Naive thymus-derived CD4-positive, alpha-beta T cell (primary cell): ENCODE measurements at regions of chr5 and their contacts with region 1.

Region 1: GRCh38 chr5:87780831-87781760 is 368.4 kb upstream of the CCNH start:
- DNase-seq: peak; percentile 41 to 80 (median 68)
- ATAC-seq: peak; percentile 98
- H3K4me3 ChIP-seq: no peak overlapping the region
- H3K4me3 Mint-ChIP-seq: no peak overlapping the region
- H3K27ac ChIP-seq: no peak overlapping the region
- H3K27ac Mint-ChIP-seq: no peak overlapping the region
- H3K4me1 ChIP-seq: no peaks in the 10 kb centered on the region
- H3K4me1 Mint-ChIP-seq: peaks cover 0 to 4% (median 0%) of the 10 kb centered on the region in 7 donors
- H3K27me3 ChIP-seq: peaks cover 0 to 6% of the 10 kb centered on the region in 2 donors
- H3K27me3 Mint-ChIP-seq: peaks cover 18 to 55% (median 46%) of the 10 kb centered on the region in 5 donors

Region 2: GRCh38 chr5:86596476-86596875 is 1184.6 kb before region 1 on chr5:
- CTCF ChIA-PET with region 1: no interaction called
- POLR2A ChIA-PET with region 1: no interaction called
- intact Hi-C with region 1: no loop called
- DNase-seq: no peak
- ATAC-seq: no peak
- H3K4me3 ChIP-seq: no peak overlapping the region
- H3K4me3 Mint-ChIP-seq: no peak overlapping the region
- H3K27ac ChIP-seq: no peak overlapping the region
- H3K27ac Mint-ChIP-seq: no peak overlapping the region
- H3K4me1 ChIP-seq: no peaks in the 10 kb centered on the region
- H3K4me1 Mint-ChIP-seq: no peaks in the 10 kb centered on the region
- H3K27me3 ChIP-seq: peaks cover 0 to 4% of the 10 kb centered on the region in 2 donors
- H3K27me3 Mint-ChIP-seq: peaks cover 0 to 52% (median 35%) of the 10 kb centered on the region in 5 donors

Region 3: GRCh38 chr5:87954121-87954520 is 173.0 kb after region 1 on chr5:
- CTCF ChIA-PET with region 1: no interaction called
- POLR2A ChIA-PET with region 1: no interaction called
- intact Hi-C with region 1: no loop called
- DNase-seq: no peak
- ATAC-seq: no peak
- H3K4me3 ChIP-seq: no peak overlapping the region
- H3K4me3 Mint-ChIP-seq: no peak overlapping the region
- H3K27ac ChIP-seq: no peak overlapping the region
- H3K27ac Mint-ChIP-seq: no peak overlapping the region
- H3K4me1 ChIP-seq: no peaks in the 10 kb centered on the region
- H3K4me1 Mint-ChIP-seq: no peaks in the 10 kb centered on the region
- H3K27me3 ChIP-seq: peaks cover 0 to 5% of the 10 kb centered on the region in 2 donors
- H3K27me3 Mint-ChIP-seq: peaks cover 0 to 11% (median 5%) of the 10 kb centered on the region in 5 donors

Region 4: GRCh38 chr5:88140856-88141752 is 360.0 kb after region 1 on chr5:
- CTCF ChIA-PET with region 1: no interaction called
- POLR2A ChIA-PET with region 1: no interaction called
- intact Hi-C with region 1: loop called in 1 of 2 experiments (anchors 5 kb)
- DNase-seq: peak; percentile 50 to 83 (median 60)
- ATAC-seq: peak; percentile 92
- H3K4me3 ChIP-seq: peak overlapping the region; percentile 43
- H3K4me3 Mint-ChIP-seq: no peak overlapping the region
- H3K27ac ChIP-seq: no peak overlapping the region
- H3K27ac Mint-ChIP-seq: no peak overlapping the region
- H3K4me1 ChIP-seq: peaks cover 19 to 24% of the 10 kb centered on the region in 2 donors
- H3K4me1 Mint-ChIP-seq: peaks cover 7 to 22% (median 9%) of the 10 kb centered on the region in 7 donors
- H3K27me3 ChIP-seq: peaks cover 17 to 28% of the 10 kb centered on the region in 2 donors
- H3K27me3 Mint-ChIP-seq: peaks cover 18 to 44% (median 38%) of the 10 kb centered on the region in 5 donors

Region 5: DNA sequence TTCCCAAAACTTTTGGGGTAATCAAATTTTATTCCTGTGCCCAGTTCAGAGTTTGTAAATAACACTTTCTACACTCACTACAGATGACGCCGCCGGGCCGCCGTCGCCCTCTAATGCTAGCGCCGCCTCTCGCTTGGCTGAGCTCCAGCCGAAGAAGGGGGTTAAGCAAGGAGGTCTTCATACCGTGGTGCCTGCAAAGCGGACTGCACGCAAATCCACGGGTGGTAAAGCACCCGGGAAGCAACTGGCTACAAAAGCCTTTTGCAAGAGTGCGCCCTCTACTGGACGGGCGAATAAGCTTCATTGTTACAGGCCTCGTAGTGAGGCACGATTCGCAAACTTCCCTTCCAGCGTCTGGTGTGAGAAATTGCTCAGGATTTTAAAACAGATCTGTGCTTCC is 821.5 kb after region 1 on chr5:
- CTCF ChIA-PET with region 1: no interaction called
- POLR2A ChIA-PET with region 1: no interaction called
- intact Hi-C with region 1: loop called in 1 of 2 experiments (anchors 2 kb)
- DNase-seq: peak in 1 of 9 donors; percentile 35
- ATAC-seq: no peak
- H3K4me3 ChIP-seq: no peak overlapping the region
- H3K4me3 Mint-ChIP-seq: no peak overlapping the region
- H3K27ac ChIP-seq: no peak overlapping the region
- H3K27ac Mint-ChIP-seq: no peak overlapping the region
- H3K4me1 ChIP-seq: no peaks in the 10 kb centered on the region
- H3K4me1 Mint-ChIP-seq: peaks cover 0 to 5% (median 0%) of the 10 kb centered on the region in 7 donors
- H3K27me3 ChIP-seq: no peaks in the 10 kb centered on the region
- H3K27me3 Mint-ChIP-seq: peaks cover 3 to 20% (median 7%) of the 10 kb centered on the region in 5 donors

Region 6: DNA sequence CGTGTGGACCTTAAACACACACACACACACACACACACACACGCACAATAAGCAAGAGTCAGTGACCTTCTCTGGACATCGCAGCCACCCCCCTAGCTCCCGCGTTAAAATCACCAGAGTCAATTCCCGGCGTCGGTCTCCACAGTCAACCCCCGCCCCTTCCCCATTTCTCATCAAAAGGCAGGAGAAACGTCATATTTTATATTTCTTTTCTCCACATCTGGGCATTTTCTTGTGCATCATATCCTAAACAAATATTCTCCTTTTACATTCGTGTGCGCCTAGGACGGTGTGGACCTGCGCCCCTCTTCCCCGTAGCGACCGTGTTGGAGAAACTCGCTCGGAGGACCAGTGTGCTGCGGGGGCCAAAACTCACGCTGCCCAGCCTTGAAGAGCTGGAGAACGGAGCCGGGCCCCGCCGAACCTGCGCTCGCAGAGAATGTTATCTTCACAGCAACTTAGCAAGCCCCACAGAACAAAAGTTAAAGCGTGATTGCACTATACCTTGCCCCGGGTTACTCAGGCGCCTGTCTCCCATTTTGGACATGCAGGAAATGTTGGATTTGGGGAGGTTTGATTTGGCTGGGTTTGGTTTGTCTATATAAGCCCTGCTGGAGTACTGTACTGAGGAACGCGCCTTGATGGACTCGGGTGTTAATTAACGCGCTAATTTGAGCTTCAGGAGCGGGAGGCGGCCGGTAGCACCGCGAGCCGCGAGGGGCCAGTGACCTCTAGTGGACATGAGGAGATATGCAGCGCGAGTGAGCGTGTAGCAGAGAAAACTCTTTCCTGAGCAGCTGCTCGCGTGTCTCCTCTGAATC is 909.5 kb after region 1 on chr5:
- CTCF ChIA-PET with region 1: interaction called, 19 read pairs
- POLR2A ChIA-PET with region 1: no interaction called
- intact Hi-C with region 1: loop called (anchors 1 kb)
- DNase-seq: peak in 8 of 9 donors; percentile 35 to 71 (median 66)
- ATAC-seq: peak; percentile 90
- H3K4me3 ChIP-seq: no peak overlapping the region
- H3K4me3 Mint-ChIP-seq: peak overlapping the region; percentile 61 to 81 (median 72)
- H3K27ac ChIP-seq: no peak overlapping the region
- H3K27ac Mint-ChIP-seq: peak overlapping the region in 7 of 9 donors; percentile 12 to 88 (median 39)
- H3K4me1 ChIP-seq: peaks cover 7 to 14% of the 10 kb centered on the region in 2 donors
- H3K4me1 Mint-ChIP-seq: peaks cover 11 to 32% (median 19%) of the 10 kb centered on the region in 7 donors
- H3K27me3 ChIP-seq: peaks cover 38 to 56% of the 10 kb centered on the region in 2 donors
- H3K27me3 Mint-ChIP-seq: peaks cover 87 to 93% (median 91%) of the 10 kb centered on the region in 5 donors

Region 7: GRCh38 chr5:88883059-88883835 is 1102.2 kb after region 1 on chr5 and contains the start of gene MEF2C:
- CTCF ChIA-PET with region 1: no interaction called
- POLR2A ChIA-PET with region 1: no interaction called
- intact Hi-C with region 1: loop called in 1 of 2 experiments (anchors 10 kb)
- DNase-seq: no peak
- ATAC-seq: peak; percentile 75
- H3K4me3 ChIP-seq: peak within 1 kb of the TSS; percentile 41
- H3K4me3 Mint-ChIP-seq: peak within 1 kb of the TSS; percentile 82 to 94 (median 88)
- H3K27ac ChIP-seq: no peak within 1 kb of the TSS
- H3K27ac Mint-ChIP-seq: peak within 1 kb of the TSS in 1 of 9 donors; percentile 24
- H3K4me1 ChIP-seq: peaks cover 0 to 6% of the 10 kb centered on the region in 2 donors
- H3K4me1 Mint-ChIP-seq: peaks cover 17 to 29% (median 26%) of the 10 kb centered on the region in 7 donors
- H3K27me3 ChIP-seq: peaks cover 0 to 5% of the 10 kb centered on the region in 2 donors
- H3K27me3 Mint-ChIP-seq: peaks cover 34 to 81% (median 44%) of the 10 kb centered on the region in 5 donors
- total RNA-seq, gene MEF2C: 0.07 to 40.0 (median 3.4) TPM